Spleen (tissue), 13 donors: ENCODE measurements at regions of chr6 and their contacts with region 1.

Region 1: GRCh38 chr6:33014841-33015634 is 5.6 kb upstream of the HLA-DOA start:
- DNase-seq: no peak
- H3K4me3 ChIP-seq: peak overlapping the region in 1 of 8 donors; percentile 7
- H3K27ac ChIP-seq: peak overlapping the region in 6 of 8 donors; percentile 26 to 95 (median 62)
- H3K4me1 ChIP-seq: peaks cover 32 to 55% (median 48%) of the 10 kb centered on the region in 6 donors
- H3K27me3 ChIP-seq: no peaks in the 10 kb centered on the region
- CTCF ChIP-seq: peak; percentile 79 to 94 (median 90)
- POLR2A ChIP-seq: no peak

Region 2: DNA sequence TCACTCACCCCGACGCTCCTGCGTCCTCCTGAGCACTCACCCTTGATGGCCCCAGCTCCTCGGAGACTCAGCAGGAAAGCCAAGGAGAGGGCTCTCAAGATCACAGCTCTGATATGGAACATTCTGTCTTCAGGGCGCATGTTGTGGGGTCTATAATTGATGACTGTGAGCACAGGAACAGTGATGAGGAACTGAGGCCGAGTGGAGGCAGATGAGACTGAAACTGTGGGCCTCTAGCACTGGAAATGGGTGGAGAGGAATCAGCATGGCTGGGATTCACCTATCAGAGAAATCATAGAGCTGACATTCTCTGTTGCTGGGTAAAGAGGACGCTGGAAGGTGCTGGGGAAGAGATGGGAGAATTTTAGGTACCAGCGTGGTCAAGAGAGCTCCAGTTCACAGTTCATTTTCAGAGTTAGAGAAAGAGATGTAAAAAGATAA is 58.4 kb after region 1 on chr6 and contains the start of gene HLA-DPA1:
- intact Hi-C with region 1: loop called (anchors 5 kb)
- DNase-seq: peak; percentile 81
- H3K4me3 ChIP-seq: peak within 1 kb of the TSS; percentile 27 to 76 (median 54)
- H3K27ac ChIP-seq: peak within 1 kb of the TSS; percentile 89 to 97 (median 94)
- H3K4me1 ChIP-seq: peaks cover 18 to 95% (median 76%) of the 10 kb centered on the region in 6 donors
- H3K27me3 ChIP-seq: no peaks in the 10 kb centered on the region
- CTCF ChIP-seq: no peak
- POLR2A ChIP-seq: peak; percentile 81 to 99 (median 97)
- total RNA-seq, gene HLA-DPA1: 253 to 621 (median 517) TPM

Region 3: DNA sequence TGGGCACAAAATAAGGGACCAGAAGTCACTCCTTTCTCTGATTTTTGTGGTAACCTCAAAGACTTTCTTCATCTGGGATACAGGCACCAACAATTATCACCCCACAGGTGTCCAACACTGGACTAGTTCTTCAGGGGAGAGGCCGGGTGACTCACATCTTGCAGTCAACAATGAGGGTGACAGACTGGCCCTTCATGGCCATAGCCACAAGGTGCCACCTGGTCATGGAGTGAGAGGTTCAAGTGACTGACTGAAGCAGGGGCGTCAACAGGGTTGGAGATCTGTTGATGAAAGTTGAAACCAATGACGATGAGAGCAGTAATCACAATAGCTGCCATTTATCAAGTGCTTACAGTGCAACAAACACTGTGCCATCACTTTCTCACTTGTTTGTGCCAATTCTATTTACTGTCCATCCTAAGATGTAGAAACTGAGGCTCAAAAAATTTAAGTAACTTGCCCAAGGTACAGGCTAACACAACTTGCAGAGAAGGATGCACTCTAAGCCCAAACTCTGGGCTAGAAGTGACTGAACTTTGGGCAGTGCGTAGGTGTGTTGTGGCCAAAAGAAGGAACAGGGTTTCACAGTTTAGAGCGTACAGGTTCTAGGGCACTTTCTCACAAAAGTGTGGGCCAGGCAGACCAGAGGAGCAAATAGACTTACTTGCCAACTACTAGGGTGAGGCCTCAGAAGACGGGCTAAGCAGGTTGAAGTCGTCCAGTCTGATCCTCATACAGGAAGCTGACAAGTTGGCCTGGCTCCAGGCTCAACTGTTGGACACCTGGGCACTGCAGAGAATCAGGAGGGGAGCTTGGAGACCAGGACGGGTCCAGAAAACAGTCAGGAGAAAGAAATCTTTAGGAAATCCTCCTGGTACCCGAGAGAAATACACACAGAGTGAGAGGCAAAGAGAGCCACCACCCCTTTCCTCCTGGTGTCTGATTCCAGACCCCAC is 91.2 kb after region 1 on chr6:
- intact Hi-C with region 1: no loop called
- DNase-seq: no peak
- H3K4me3 ChIP-seq: no peak overlapping the region
- H3K27ac ChIP-seq: no peak overlapping the region
- H3K4me1 ChIP-seq: no peaks in the 10 kb centered on the region
- H3K27me3 ChIP-seq: no peaks in the 10 kb centered on the region
- CTCF ChIP-seq: no peak
- POLR2A ChIP-seq: no peak

Region 4: GRCh38 chr6:33147807-33148666 is 133.0 kb after region 1 on chr6:
- intact Hi-C with region 1: loop called (anchors 10 kb)
- DNase-seq: no peak
- H3K4me3 ChIP-seq: no peak overlapping the region
- H3K27ac ChIP-seq: no peak overlapping the region
- H3K4me1 ChIP-seq: peaks cover 0 to 22% (median 7%) of the 10 kb centered on the region in 6 donors
- H3K27me3 ChIP-seq: peaks cover 0 to 12% (median 0%) of the 10 kb centered on the region in 7 donors
- CTCF ChIP-seq: peak; percentile 26 to 78 (median 69)
- POLR2A ChIP-seq: no peak